H1 (cell line): ENCODE measurements at regions of chr18 and their contacts with region 1.

Region 1: DNA sequence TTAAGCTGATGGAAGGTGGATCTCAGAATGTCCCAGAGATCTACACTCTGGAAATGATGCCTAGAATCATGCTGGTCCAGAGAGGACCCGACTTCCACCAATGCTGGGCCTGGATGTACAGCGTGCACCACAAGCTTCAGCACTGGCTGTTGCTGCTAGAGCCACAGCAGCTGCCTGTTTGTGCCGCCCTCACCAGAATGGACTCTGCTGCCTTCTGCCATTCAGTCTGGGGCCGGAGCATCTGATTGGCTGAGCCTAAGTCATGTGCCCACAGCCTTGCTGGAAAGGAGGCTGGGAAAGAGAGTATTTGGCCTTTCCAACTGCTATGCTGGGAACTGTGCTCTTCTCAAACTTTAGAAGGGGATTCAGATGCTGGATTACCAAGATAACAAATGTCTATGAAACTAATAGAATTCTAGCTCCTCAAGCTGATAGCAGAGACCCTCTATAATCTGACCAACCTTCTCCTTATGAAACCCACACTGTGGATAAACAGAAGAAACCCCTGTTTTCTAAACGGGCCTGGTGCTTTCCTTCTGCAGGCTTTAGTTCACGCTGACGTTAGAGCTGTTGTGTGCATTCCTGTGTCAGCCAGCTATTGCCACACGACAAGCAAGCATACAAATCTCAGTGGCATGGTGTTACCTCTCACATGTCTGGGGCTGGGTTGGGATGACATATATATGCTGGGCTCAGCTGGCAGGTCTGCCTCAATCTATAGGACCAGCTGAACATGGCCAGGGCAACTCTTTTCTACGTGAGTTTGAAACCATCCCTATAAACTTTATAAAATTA is 4.1 kb upstream of the LOXHD1 start:
- DNase-seq: peak in 1 of 2 experiments; percentile 65
- H3K4me3 ChIP-seq: no peak overlapping the region
- H3K27ac ChIP-seq: no peak overlapping the region
- H3K4me1 ChIP-seq: peaks cover 0 to 9% (median 1%) of the 10 kb centered on the region in 4 experiments; a peak in 1 of 7 replicates
- H3K27me3 ChIP-seq: no peaks in the 10 kb centered on the region
- CTCF ChIP-seq: no peak
- EP300 ChIP-seq: no peak
- POLR2A ChIP-seq: no peak
- RAD21 ChIP-seq: no peak

Region 2: GRCh38 chr18:46250084-46250811 is 410.9 kb before region 1 on chr18:
- CTCF ChIA-PET with region 1: no interaction called
- POLR2A ChIA-PET with region 1: no interaction called
- DNase-seq: no peak
- H3K4me3 ChIP-seq: no peak overlapping the region
- H3K27ac ChIP-seq: no peak overlapping the region
- H3K4me1 ChIP-seq: peaks cover 2 to 3% (median 3%) of the 10 kb centered on the region in 4 experiments; a peak in 5 of 7 replicates
- H3K27me3 ChIP-seq: no peaks in the 10 kb centered on the region
- CTCF ChIP-seq: no peak
- EP300 ChIP-seq: no peak
- POLR2A ChIP-seq: no peak
- RAD21 ChIP-seq: no peak

Region 3: GRCh38 chr18:46402396-46402795 is 258.8 kb before region 1 on chr18:
- CTCF ChIA-PET with region 1: interaction called, 10 read pairs
- POLR2A ChIA-PET with region 1: no interaction called
- DNase-seq: no peak
- H3K4me3 ChIP-seq: no peak overlapping the region
- H3K27ac ChIP-seq: no peak overlapping the region
- H3K4me1 ChIP-seq: no peaks in the 10 kb centered on the region; a peak in 1 of 7 replicates
- H3K27me3 ChIP-seq: no peaks in the 10 kb centered on the region; a peak in 1 of 7 replicates
- CTCF ChIP-seq: no peak
- EP300 ChIP-seq: no peak
- POLR2A ChIP-seq: no peak
- RAD21 ChIP-seq: no peak

Region 4: GRCh38 chr18:46433121-46433826 is 227.9 kb before region 1 on chr18:
- CTCF ChIA-PET with region 1: interaction called, 11 read pairs
- POLR2A ChIA-PET with region 1: no interaction called
- DNase-seq: peak; percentile 46 to 94
- H3K4me3 ChIP-seq: peak overlapping the region in 3 of 4 experiments; percentile 17 to 49 (median 49); a peak in 5 of 8 replicates
- H3K27ac ChIP-seq: no peak overlapping the region
- H3K4me1 ChIP-seq: peaks cover 0 to 17% (median 9%) of the 10 kb centered on the region in 4 experiments; a peak in 6 of 7 replicates
- H3K27me3 ChIP-seq: no peaks in the 10 kb centered on the region
- CTCF ChIP-seq: no peak
- EP300 ChIP-seq: no peak
- POLR2A ChIP-seq: no peak
- RAD21 ChIP-seq: peak in 1 of 2 experiments; percentile 0; a peak in 1 of 4 replicates

Region 5: DNA sequence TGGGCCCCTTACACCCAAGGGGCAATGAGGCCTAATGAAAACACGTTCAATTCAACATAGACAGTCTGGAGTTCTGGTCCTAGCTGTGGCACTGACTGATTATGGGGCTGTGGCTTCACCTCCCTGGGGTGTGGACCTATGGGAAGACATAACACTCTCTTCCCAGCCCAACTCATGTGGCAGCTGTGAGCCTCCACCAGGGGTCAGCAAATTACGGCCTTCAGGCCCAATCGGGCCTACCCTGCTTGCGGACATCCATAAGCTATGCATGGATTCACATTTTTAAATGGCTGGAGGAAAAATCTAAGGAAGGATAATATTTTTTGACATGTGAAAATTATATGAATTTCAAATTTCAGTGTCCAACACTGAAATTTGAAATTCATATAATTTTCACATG is 105.4 kb before region 1 on chr18:
- CTCF ChIA-PET with region 1: interaction called, 148 read pairs
- POLR2A ChIA-PET with region 1: no interaction called
- DNase-seq: peak; percentile 21 to 76
- H3K4me3 ChIP-seq: no peak overlapping the region
- H3K27ac ChIP-seq: no peak overlapping the region
- H3K4me1 ChIP-seq: peaks cover 0 to 3% (median 0%) of the 10 kb centered on the region in 4 experiments; a peak in 1 of 7 replicates
- H3K27me3 ChIP-seq: no peaks in the 10 kb centered on the region
- CTCF ChIP-seq: peak; percentile 85 to 88 (median 88)
- EP300 ChIP-seq: no peak
- POLR2A ChIP-seq: no peak
- RAD21 ChIP-seq: peak; percentile 88 to 91

Region 6: GRCh38 chr18:46622999-46623398 is 38.2 kb before region 1 on chr18:
- CTCF ChIA-PET with region 1: interaction called, 16 read pairs
- POLR2A ChIA-PET with region 1: no interaction called
- DNase-seq: no peak
- H3K4me3 ChIP-seq: no peak overlapping the region
- H3K27ac ChIP-seq: no peak overlapping the region
- H3K4me1 ChIP-seq: peaks cover 0 to 3% (median 0%) of the 10 kb centered on the region in 4 experiments; a peak in 1 of 7 replicates
- H3K27me3 ChIP-seq: no peaks in the 10 kb centered on the region
- CTCF ChIP-seq: peak in 2 of 3 experiments; percentile 4 to 19; a peak in 2 of 4 replicates
- EP300 ChIP-seq: no peak
- POLR2A ChIP-seq: no peak
- RAD21 ChIP-seq: peak; percentile 41 to 47

Region 7: DNA sequence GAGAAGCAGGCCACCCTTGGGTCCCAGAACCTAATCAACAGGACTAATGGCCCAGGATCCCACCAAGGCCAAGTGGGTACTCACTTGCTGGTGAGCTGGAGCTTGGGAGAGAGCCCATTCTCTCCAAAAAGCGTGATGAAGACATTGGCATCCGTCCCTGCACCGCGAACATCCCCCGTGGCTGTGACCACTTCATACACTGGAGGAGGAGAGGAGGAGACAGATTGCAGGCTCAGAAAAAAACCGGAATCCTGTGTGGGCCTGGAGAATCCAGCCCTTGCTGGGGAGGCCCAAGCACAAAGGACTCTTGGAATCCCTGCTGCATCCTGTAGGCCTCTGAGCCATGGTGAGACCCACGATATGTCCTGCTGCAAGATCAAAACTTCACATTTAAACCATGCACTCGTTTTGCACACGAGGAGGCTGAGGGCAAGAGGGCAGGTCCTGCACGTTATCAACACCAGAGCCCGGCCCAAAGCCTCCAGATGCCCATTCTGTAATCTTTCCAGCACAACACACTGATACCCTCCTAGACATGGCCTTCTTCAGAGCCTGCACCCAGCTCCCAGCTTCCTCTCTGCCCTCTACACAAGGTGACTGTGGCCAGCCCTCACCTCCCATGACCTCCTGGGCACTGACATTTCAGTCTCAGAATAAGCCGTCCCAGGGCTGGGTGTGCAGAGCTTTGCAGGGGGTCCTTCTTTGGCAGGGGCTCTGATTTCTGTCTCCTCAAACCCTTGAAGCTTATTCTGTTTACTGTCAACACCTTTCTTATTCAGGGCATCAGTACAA is 11.9 kb before region 1 on chr18:
- CTCF ChIA-PET with region 1: interaction called, 47 read pairs
- POLR2A ChIA-PET with region 1: interaction called, 4 read pairs
- DNase-seq: no peak
- H3K4me3 ChIP-seq: no peak overlapping the region
- H3K27ac ChIP-seq: no peak overlapping the region
- H3K4me1 ChIP-seq: no peaks in the 10 kb centered on the region; a peak in 1 of 7 replicates
- H3K27me3 ChIP-seq: no peaks in the 10 kb centered on the region
- CTCF ChIP-seq: no peak
- EP300 ChIP-seq: no peak
- POLR2A ChIP-seq: no peak
- RAD21 ChIP-seq: no peak

Region 8: GRCh38 chr18:46677611-46678010 is 16.5 kb after region 1 on chr18:
- CTCF ChIA-PET with region 1: interaction called, 38 read pairs
- POLR2A ChIA-PET with region 1: no interaction called
- DNase-seq: no peak
- H3K4me3 ChIP-seq: no peak overlapping the region
- H3K27ac ChIP-seq: no peak overlapping the region
- H3K4me1 ChIP-seq: peaks cover 0 to 6% (median 2%) of the 10 kb centered on the region in 4 experiments; a peak in 4 of 7 replicates
- H3K27me3 ChIP-seq: no peaks in the 10 kb centered on the region
- CTCF ChIP-seq: peak in 2 of 3 experiments; percentile 31 to 34; a peak in 2 of 4 replicates
- EP300 ChIP-seq: no peak
- POLR2A ChIP-seq: no peak
- RAD21 ChIP-seq: peak; percentile 43 to 53; a peak in 3 of 4 replicates